ENCODE measurements at regions of chr9 and their contacts with region 1.

Region 1: DNA sequence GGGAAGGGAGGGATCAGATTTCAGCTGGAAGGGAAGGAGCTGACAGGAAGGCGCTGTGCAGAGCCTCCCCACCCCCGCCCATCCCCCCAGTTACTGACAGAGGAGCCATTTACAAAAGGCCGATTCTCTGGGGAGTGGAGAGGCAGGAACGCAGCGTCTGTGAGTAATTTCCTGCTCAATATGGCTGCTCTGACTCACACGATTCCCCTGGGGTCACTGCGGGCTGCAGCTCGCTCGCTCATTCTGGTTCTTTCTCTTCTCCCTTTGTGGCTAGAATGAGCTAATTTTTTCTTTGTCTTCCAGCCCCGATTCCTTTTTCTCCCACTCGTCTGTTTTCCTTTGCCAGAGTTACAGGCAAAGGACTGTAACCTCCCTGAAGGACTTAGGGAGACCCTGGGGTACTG is 28.8 kb downstream of the PTPA start:
- DNase-seq: peak; percentile 93

Region 2: DNA sequence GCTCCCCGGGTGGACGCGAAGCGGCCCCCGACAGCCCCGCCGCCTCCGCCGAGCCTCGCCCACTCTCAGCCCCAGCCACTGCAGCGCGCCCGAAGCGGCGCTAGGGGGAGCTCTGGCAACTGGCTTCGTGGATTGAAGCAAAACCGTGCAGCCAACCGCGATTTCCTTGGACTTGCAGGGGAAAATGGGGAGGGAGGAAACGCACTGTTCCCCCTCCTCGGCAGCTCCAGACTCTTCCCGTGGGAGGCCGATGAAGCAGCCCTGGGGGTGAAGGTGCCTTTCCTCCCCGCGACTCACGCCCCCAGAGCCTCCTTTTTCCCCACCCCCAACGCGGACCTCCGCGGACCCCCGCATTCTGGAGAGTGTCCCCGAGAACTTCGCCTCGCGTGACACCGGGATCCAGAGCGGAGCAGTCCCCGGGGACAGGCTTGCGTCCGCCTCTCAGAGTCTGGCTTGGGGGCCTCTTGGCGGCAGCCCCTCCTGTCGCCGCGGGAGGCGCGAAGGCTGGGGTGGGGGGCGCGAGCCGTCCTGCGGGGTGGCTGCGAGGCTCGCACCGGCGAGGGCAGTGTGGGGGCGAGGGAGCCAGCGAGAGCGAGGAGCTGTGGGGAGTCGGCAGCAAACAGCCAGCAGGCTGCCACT is 34.2 kb after region 1 on chr9:
- intact Hi-C with region 1: loop called (anchors 1 kb)
- DNase-seq: peak; percentile 95

Region 3: GRCh38 chr9:129333953-129334724 is 194.1 kb after region 1 on chr9:
- intact Hi-C with region 1: loop called (anchors 1 kb)
- DNase-seq: peak; percentile 96

Region 4: GRCh38 chr9:129487642-129488409 is 347.8 kb after region 1 on chr9:
- intact Hi-C with region 1: loop called (anchors 1 kb)
- DNase-seq: no peak

Region 5: GRCh38 chr9:129610473-129611301 is 470.7 kb after region 1 on chr9:
- intact Hi-C with region 1: loop called (anchors 1 kb)
- DNase-seq: peak; percentile 92

Measured in cardiac septum (tissue), 1 donor.